Activated naive CD8-positive, alpha-beta T cell treated with anti-CD3 and anti-CD28 coated beads, Interleukin-2, amount 10 ng/mL, durations not matched to agents 7 days and 5 days (primary cell): ENCODE measurements at regions of chr3 and their contacts with region 1.

Region 1: GRCh38 chr3:16884084-16884747 is 539 bp upstream of the PLCL2 start:
- DNase-seq: peak; percentile 81
- ATAC-seq: peak; percentile 41
- H3K4me3 Mint-ChIP-seq: peak overlapping the region; percentile 95
- H3K27ac Mint-ChIP-seq: peak overlapping the region; percentile 96
- H3K4me1 Mint-ChIP-seq: peaks cover 23% of the 10 kb centered on the region
- H3K27me3 Mint-ChIP-seq: peaks cover 2% of the 10 kb centered on the region

Region 2: GRCh38 chr3:16842272-16843270 is 41.6 kb before region 1 on chr3:
- POLR2A ChIA-PET with region 1: interaction called, 31 read pairs
- DNase-seq: peak; percentile 72
- ATAC-seq: peak; percentile 82
- H3K4me3 Mint-ChIP-seq: peak overlapping the region; percentile 82
- H3K27ac Mint-ChIP-seq: peak overlapping the region; percentile 95
- H3K4me1 Mint-ChIP-seq: peaks cover 47% of the 10 kb centered on the region
- H3K27me3 Mint-ChIP-seq: peaks cover 2% of the 10 kb centered on the region

Region 3: GRCh38 chr3:16849229-16849628 is 35.0 kb before region 1 on chr3:
- POLR2A ChIA-PET with region 1: interaction called, 31 read pairs
- DNase-seq: peak; percentile 49
- ATAC-seq: peak; percentile 88
- H3K4me3 Mint-ChIP-seq: peak overlapping the region; percentile 59
- H3K27ac Mint-ChIP-seq: peak overlapping the region; percentile 60
- H3K4me1 Mint-ChIP-seq: peaks cover 16% of the 10 kb centered on the region
- H3K27me3 Mint-ChIP-seq: peaks cover 2% of the 10 kb centered on the region

Region 4: DNA sequence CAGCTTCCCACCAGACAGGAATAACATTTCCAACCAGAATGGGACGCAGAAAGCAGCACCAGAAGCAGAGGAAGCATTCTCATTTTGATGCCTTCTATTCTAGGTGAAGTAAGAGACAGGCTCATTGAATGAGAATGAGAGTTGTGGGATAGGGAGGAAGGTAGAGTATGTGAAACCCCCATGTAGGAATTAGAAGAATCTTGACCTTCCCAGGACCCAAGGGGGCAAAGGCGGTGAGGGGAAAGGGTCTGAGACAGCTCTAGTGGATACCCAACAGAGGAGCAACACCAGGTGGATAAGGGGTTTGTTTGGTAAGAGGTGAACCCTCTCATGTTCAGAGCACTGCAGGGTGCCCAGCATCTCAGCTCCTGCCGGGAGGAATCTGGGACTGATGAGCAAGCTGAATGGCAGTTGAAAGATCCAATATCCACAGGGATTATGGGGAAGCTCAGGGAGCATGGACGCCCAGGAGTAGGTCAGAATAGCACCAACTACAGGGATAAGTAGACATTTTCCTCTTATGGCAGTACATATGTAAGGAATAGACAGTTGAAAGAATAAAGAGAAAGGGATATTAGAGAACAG is 77.5 kb after region 1 on chr3:
- POLR2A ChIA-PET with region 1: no interaction called
- DNase-seq: no peak
- ATAC-seq: no peak
- H3K4me3 Mint-ChIP-seq: no peak overlapping the region
- H3K27ac Mint-ChIP-seq: no peak overlapping the region
- H3K4me1 Mint-ChIP-seq: no peaks in the 10 kb centered on the region
- H3K27me3 Mint-ChIP-seq: no peaks in the 10 kb centered on the region